OCI-LY7 (cell line): ENCODE measurements at regions of chr14 and their contacts with region 1.

Region 1: GRCh38 chr14:34982417-34983147 is at the start of gene SRP54:
- DNase-seq: peak; percentile 99
- H3K4me3 ChIP-seq: peak within 1 kb of the TSS; percentile 95
- H3K27ac ChIP-seq: peak within 1 kb of the TSS; percentile 91
- H3K4me1 ChIP-seq: peaks cover 30% of the 10 kb centered on the region
- CTCF ChIP-seq: no peak
- total RNA-seq, gene SRP54: 50.9 and 53.8 TPM in 2 replicates

Region 2: DNA sequence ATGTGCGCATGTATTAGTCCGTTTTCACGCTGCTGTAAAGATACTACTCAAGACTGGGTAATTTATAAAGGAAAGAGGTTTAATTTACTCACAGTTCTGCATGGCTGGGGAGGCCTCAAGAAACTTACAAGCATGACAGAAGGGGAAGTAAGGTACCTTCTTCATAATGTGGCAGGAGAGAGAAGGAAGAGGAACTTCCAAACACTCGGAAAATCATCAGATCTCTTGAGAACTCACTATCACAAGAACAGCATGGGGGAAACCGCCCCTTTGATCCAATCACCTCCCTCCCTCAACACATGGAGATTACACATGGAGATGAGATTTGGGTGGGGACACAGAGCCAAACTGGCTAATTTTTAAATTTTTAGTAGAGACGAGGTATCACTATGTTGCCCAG is 310.9 kb before region 1 on chr14:
- CTCF ChIA-PET with region 1: no interaction called
- POLR2A ChIA-PET with region 1: interaction called, 5 read pairs
- intact Hi-C with region 1: loop called (anchors 5 kb)
- DNase-seq: peak; percentile 19
- H3K4me3 ChIP-seq: no peak overlapping the region
- H3K27ac ChIP-seq: peak overlapping the region; percentile 8
- H3K4me1 ChIP-seq: peaks cover 24% of the 10 kb centered on the region
- CTCF ChIP-seq: no peak

Region 3: GRCh38 chr14:34714320-34715126 is 268.1 kb before region 1 on chr14 and contains the start of gene CFL2:
- CTCF ChIA-PET with region 1: no interaction called
- POLR2A ChIA-PET with region 1: interaction called, 6 read pairs
- intact Hi-C with region 1: loop called (anchors 5 kb)
- DNase-seq: peak; percentile 79
- H3K4me3 ChIP-seq: peak within 1 kb of the TSS; percentile 92
- H3K27ac ChIP-seq: peak within 1 kb of the TSS; percentile 87
- H3K4me1 ChIP-seq: peaks cover 48% of the 10 kb centered on the region
- CTCF ChIP-seq: no peak
- total RNA-seq, gene CFL2: 7.1 and 19.6 TPM in 2 replicates

Region 4: GRCh38 chr14:34875031-34875922 is 107.3 kb before region 1 on chr14 and contains the start of gene BAZ1A:
- CTCF ChIA-PET with region 1: no interaction called
- POLR2A ChIA-PET with region 1: interaction called, 8 read pairs
- intact Hi-C with region 1: loop called (anchors 1 kb)
- DNase-seq: peak; percentile 82
- H3K4me3 ChIP-seq: peak within 1 kb of the TSS; percentile 99
- H3K27ac ChIP-seq: peak within 1 kb of the TSS; percentile 95
- H3K4me1 ChIP-seq: peaks cover 22% of the 10 kb centered on the region
- CTCF ChIP-seq: no peak
- total RNA-seq, gene BAZ1A: 39.6 and 42.2 TPM in 2 replicates

Region 5: GRCh38 chr14:35046048-35046741 is 63.6 kb after region 1 on chr14 and contains the start of gene FAM177A1:
- CTCF ChIA-PET with region 1: interaction called, 3 read pairs
- POLR2A ChIA-PET with region 1: interaction called, 9 read pairs
- intact Hi-C with region 1: loop called (anchors 1 kb)
- DNase-seq: peak; percentile 97
- H3K4me3 ChIP-seq: peak within 1 kb of the TSS; percentile 89
- H3K27ac ChIP-seq: peak within 1 kb of the TSS; percentile 57
- H3K4me1 ChIP-seq: peaks cover 18% of the 10 kb centered on the region
- CTCF ChIP-seq: no peak
- total RNA-seq, gene FAM177A1: 17.3 and 19.0 TPM in 2 replicates

Region 6: GRCh38 chr14:35292051-35292769 is 309.6 kb after region 1 on chr14 and contains the start of gene PSMA6:
- CTCF ChIA-PET with region 1: no interaction called
- POLR2A ChIA-PET with region 1: interaction called, 3 read pairs
- intact Hi-C with region 1: loop called (anchors 5 kb)
- DNase-seq: peak; percentile 100
- H3K4me3 ChIP-seq: peak within 1 kb of the TSS; percentile 96
- H3K27ac ChIP-seq: peak within 1 kb of the TSS; percentile 99
- H3K4me1 ChIP-seq: peaks cover 69% of the 10 kb centered on the region
- CTCF ChIP-seq: no peak
- total RNA-seq, gene PSMA6: 208 and 216 TPM in 2 replicates